ENCODE measurements at regions of chr9 and their contacts with region 1.

Region 1: GRCh38 chr9:68999393-69000105 is 14.4 kb downstream of the PRKACG start:
- DNase-seq: peak in 4 of 5 donors; percentile 52 to 72 (median 62)
- ATAC-seq: peak; percentile 82 to 93 (median 92)
- H3K4me3 ChIP-seq: no peak overlapping the region
- H3K27ac ChIP-seq: peak overlapping the region in 10 of 12 donors; percentile 9 to 69 (median 62)
- H3K4me1 ChIP-seq: peaks cover 0 to 41% (median 20%) of the 10 kb centered on the region in 12 donors
- H3K27me3 ChIP-seq: no peaks in the 10 kb centered on the region
- CTCF ChIP-seq: peak; percentile 72 to 87 (median 77)
- POLR2A ChIP-seq: no peak

Region 2: DNA sequence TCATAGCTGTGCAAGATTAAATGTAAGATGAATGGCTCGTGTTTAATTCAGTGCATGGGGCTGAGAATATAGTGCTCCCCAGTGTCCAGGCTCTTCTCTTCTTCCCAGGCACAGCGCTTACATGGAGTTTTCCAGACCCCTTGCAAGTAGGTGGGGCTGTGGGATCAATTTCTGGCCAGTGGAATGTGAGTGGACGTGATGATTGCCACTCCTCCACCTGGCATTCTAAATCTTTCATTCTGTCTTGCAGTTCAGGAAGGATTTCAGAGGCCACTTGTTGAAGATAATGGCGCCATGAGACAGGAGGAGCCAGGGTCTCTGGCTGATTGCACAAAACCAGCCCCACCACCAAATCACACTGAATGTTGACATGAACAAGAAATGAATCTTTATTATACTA is 301.7 kb before region 1 on chr9:
- intact Hi-C with region 1: loop called in 5 of 10 experiments (anchors 5 to 10 kb)
- DNase-seq: no peak
- ATAC-seq: no peak
- H3K4me3 ChIP-seq: no peak overlapping the region
- H3K27ac ChIP-seq: no peak overlapping the region
- H3K4me1 ChIP-seq: peaks cover 0 to 7% (median 0%) of the 10 kb centered on the region in 12 donors
- H3K27me3 ChIP-seq: no peaks in the 10 kb centered on the region
- CTCF ChIP-seq: no peak
- POLR2A ChIP-seq: no peak

Region 3: GRCh38 chr9:68779558-68780384 is 219.8 kb before region 1 on chr9:
- intact Hi-C with region 1: loop called in 4 of 10 experiments (anchors 5 to 10 kb)
- DNase-seq: peak; percentile 95 to 98 (median 97)
- ATAC-seq: peak; percentile 88 to 95 (median 94)
- H3K4me3 ChIP-seq: peak overlapping the region; percentile 49 to 89 (median 74)
- H3K27ac ChIP-seq: peak overlapping the region; percentile 83 to 97 (median 94)
- H3K4me1 ChIP-seq: peaks cover 8 to 77% (median 60%) of the 10 kb centered on the region in 12 donors
- H3K27me3 ChIP-seq: no peaks in the 10 kb centered on the region
- CTCF ChIP-seq: peak in 9 of 12 donors; percentile 28 to 67 (median 43)
- POLR2A ChIP-seq: peak; percentile 43 to 93

Region 4: DNA sequence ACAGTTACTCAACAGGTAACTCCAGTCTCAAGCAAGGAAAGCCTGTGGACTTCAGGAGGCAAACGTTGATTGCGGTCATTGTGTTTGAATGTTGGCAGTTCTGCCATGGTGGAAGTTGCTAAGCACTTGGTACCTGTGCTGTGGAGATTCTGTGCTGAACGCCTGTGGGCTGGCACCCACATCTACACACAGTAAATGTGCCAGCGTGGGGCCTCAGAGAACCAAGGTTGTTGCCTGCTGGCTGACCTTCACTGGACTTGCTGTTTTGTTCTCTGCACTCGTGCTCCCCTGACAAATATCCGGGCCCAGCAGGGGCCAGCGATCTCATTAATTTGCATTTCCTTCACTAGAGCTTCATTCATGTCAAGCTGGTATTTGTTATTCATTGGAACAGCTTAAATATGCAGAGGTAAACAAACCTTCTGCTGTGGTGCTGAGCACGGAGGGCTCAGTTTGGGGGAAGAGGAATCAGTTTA is 127.5 kb before region 1 on chr9:
- intact Hi-C with region 1: loop called in 1 of 10 experiments (anchors 5 kb)
- DNase-seq: peak; percentile 59 to 80 (median 69)
- ATAC-seq: peak; percentile 90 to 93 (median 92)
- H3K4me3 ChIP-seq: no peak overlapping the region
- H3K27ac ChIP-seq: peak overlapping the region; percentile 46 to 84 (median 73)
- H3K4me1 ChIP-seq: peaks cover 0 to 46% (median 11%) of the 10 kb centered on the region in 12 donors
- H3K27me3 ChIP-seq: no peaks in the 10 kb centered on the region
- CTCF ChIP-seq: no peak
- POLR2A ChIP-seq: no peak

Region 5: GRCh38 chr9:68925175-68925574 is 74.4 kb before region 1 on chr9:
- intact Hi-C with region 1: loop called in 1 of 10 experiments (anchors 5 kb)
- DNase-seq: no peak
- ATAC-seq: no peak
- H3K4me3 ChIP-seq: no peak overlapping the region
- H3K27ac ChIP-seq: no peak overlapping the region
- H3K4me1 ChIP-seq: no peaks in the 10 kb centered on the region
- H3K27me3 ChIP-seq: no peaks in the 10 kb centered on the region
- CTCF ChIP-seq: no peak
- POLR2A ChIP-seq: no peak

Region 6: GRCh38 chr9:69047371-69047770 is 47.8 kb after region 1 on chr9:
- intact Hi-C with region 1: no loop called
- DNase-seq: no peak
- ATAC-seq: no peak
- H3K4me3 ChIP-seq: no peak overlapping the region
- H3K27ac ChIP-seq: peak overlapping the region in 2 of 12 donors; percentile 41 to 49
- H3K4me1 ChIP-seq: peaks cover 0 to 43% (median 15%) of the 10 kb centered on the region in 12 donors
- H3K27me3 ChIP-seq: no peaks in the 10 kb centered on the region
- CTCF ChIP-seq: no peak
- POLR2A ChIP-seq: no peak

Region 7: GRCh38 chr9:69186841-69187611 is 187.5 kb after region 1 on chr9:
- intact Hi-C with region 1: no loop called
- DNase-seq: no peak
- ATAC-seq: peak; percentile 41 to 83 (median 64)
- H3K4me3 ChIP-seq: no peak overlapping the region
- H3K27ac ChIP-seq: peak overlapping the region; percentile 1 to 81 (median 64)
- H3K4me1 ChIP-seq: peaks cover 9 to 64% (median 45%) of the 10 kb centered on the region in 12 donors
- H3K27me3 ChIP-seq: no peaks in the 10 kb centered on the region
- CTCF ChIP-seq: no peak
- POLR2A ChIP-seq: no peak

Region 8: GRCh38 chr9:69339620-69340019 is 340.1 kb after region 1 on chr9:
- intact Hi-C with region 1: no loop called
- DNase-seq: peak in 2 of 5 donors; percentile 41 to 50
- ATAC-seq: peak; percentile 49 to 75 (median 72)
- H3K4me3 ChIP-seq: no peak overlapping the region
- H3K27ac ChIP-seq: peak overlapping the region in 5 of 12 donors; percentile 0 to 34 (median 11)
- H3K4me1 ChIP-seq: peaks cover 0 to 25% (median 6%) of the 10 kb centered on the region in 12 donors
- H3K27me3 ChIP-seq: no peaks in the 10 kb centered on the region
- CTCF ChIP-seq: no peak
- POLR2A ChIP-seq: no peak

Region 9: DNA sequence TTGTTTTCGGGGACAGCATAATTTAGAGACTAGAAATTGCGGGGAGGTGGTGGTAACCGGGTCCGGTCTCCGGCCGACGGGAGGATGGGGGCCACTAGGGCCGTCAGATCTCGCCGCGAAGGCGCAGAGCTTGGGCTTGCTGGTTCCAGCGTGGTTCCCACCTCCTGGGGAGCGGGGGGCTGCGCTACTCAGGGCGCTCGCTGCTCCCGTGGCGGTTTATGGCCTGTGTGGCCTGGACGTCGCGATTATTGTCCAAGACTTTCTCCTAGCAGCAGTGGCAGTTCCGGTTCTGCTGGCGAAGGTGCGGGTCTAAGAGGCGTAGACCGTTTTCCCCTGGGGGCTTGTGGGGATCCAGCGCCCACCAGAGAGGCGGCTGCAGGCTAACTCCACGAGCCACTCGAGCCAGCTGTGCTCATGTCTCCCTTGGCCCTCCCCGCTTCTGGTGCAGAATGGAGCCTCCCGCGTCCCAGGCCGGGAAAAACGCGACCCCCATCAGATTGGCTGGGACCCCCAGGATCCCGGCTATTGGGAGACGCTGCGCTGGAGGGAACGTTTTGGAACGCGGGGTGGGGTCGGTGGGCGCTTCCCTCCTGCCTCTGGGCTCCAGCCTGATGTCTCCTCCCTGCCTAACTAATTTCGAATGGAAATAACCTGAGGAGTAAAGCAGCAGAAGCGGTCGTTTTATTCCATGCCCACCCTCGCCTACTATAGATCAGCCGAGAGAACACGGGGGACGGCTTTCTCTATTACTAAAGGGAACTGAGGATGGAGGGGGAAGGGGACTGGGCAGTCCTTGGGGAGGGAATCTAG is 412.6 kb after region 1 on chr9:
- intact Hi-C with region 1: no loop called
- DNase-seq: no peak
- ATAC-seq: peak; percentile 24 to 49 (median 37)
- H3K4me3 ChIP-seq: peak overlapping the region in 4 of 12 donors; percentile 34 to 49 (median 41)
- H3K27ac ChIP-seq: no peak overlapping the region
- H3K4me1 ChIP-seq: peaks cover 0 to 8% (median 0%) of the 10 kb centered on the region in 12 donors
- H3K27me3 ChIP-seq: no peaks in the 10 kb centered on the region
- CTCF ChIP-seq: no peak
- POLR2A ChIP-seq: no peak

Measured in heart left ventricle (tissue), 16 donors.